Left cardiac atrium (tissue), 4 donors: ENCODE measurements at regions of chr9 and their contacts with region 1.

Region 1: GRCh38 chr9:20835364-20836286 is 151.6 kb downstream of the FOCAD start:
- DNase-seq: no peak
- ATAC-seq: peak in 1 of 2 donors; percentile 34

Region 2: GRCh38 chr9:20693068-20693467 is 142.6 kb before region 1 on chr9:
- intact Hi-C with region 1: loop called in 1 of 2 experiments (anchors 10 kb)
- DNase-seq: no peak
- ATAC-seq: peak; percentile 66 to 73

Region 3: DNA sequence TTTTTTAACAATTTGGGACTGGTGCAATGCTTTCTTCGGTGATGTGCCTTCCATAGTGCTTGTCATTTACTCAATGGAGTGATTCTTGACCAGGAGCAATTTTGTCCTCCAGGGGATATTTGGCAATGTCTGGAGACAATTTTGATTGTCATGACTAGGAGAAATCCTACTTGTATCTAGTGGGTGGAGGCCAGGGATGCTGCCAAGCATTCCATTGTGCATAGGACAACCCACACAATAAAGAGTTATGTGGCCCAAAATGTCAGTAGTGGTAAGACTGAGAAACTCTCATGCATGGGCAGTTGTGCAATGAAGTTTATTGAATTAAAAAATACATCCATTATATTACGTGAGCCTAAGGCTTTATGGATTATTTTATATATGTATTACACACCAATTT is 81.1 kb before region 1 on chr9:
- intact Hi-C with region 1: no loop called
- DNase-seq: no peak
- ATAC-seq: no peak